Upper lobe of right lung (tissue), 1 donor: ENCODE measurements at regions of chr18 and their contacts with region 1.

Region 1: GRCh38 chr18:58781627-58782194 is 83.0 kb upstream of the ZNF532 start:
- DNase-seq: peak; percentile 72
- ATAC-seq: peak; percentile 92
- H3K4me3 ChIP-seq: no peak overlapping the region
- H3K27ac ChIP-seq: no peak overlapping the region
- H3K4me1 ChIP-seq: peaks cover 8% of the 10 kb centered on the region
- H3K27me3 ChIP-seq: no peaks in the 10 kb centered on the region
- CTCF ChIP-seq: peak; percentile 86

Region 2: DNA sequence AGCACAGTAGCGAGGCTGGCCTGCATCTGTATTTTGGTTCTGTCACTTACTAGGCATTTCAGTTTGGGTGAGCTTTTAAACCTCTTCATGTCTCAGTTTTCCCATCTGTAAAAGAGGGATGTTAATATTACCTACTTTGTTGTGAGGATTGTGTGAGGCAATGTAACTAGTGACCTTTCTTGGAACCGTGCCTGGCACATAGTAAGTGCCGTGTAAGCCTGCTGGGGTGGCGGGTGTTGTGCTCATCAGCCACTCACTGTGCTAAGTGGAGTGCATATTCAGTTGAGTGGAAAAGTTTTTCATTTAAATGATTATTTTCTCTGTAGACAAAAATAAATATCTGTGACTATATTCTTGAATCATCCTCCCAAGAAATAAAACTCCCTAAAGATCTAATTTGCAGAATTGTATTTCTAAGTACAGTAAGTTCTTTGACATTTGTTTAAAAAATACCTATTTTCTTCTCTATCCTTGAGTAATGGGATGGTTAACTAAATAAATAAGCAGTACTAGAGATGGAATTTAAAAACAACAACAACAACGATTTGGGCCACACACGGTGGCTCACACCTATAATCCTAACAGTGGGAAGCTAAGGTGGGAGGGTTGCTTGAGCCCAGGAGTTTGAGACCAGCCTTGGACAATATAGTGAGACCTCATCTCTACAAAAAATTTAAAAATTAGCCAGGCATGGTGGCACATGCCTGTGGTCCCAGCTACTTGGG is 53.8 kb before region 1 on chr18:
- intact Hi-C with region 1: no loop called
- DNase-seq: no peak
- ATAC-seq: no peak
- H3K4me3 ChIP-seq: no peak overlapping the region
- H3K27ac ChIP-seq: no peak overlapping the region
- H3K4me1 ChIP-seq: peaks cover 4% of the 10 kb centered on the region
- H3K27me3 ChIP-seq: no peaks in the 10 kb centered on the region
- CTCF ChIP-seq: no peak

Region 3: DNA sequence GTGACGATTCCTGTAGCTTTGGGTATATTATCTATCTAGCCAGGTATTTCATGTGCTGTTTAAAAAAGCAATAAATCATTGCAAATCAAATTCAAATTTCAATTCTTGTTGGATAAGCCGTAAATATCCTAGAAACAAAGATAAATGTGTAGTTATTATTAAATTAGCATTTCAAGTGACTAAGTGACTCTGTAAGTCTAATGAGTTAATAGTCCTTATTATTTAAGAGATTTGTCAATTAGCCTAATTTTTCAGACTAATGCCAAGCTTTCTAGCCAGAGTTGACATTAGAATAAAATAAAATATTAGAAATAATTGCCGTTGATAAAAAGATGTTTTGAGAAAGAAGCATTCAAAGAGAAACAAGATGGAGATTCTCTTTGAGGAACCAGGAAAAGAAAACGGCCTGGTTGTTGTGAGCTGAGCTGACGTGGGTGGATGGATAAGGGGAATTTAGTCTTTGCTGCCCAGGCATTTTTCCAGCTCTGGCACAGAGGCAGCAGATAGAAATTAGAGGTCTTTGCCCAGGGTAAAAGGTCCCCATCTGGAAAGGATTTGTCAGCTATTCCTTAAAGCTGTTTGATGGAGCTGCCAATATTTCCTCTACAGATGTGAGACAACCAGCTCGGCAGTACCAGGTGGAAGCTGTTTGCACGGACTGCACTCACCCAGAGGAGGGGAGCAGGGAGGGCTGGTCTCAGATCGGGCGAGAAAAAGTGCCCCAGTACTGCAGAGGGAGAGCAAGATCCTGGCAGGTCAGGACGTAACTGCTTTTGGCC is 240.6 kb after region 1 on chr18:
- intact Hi-C with region 1: no loop called
- DNase-seq: no peak
- ATAC-seq: peak; percentile 68
- H3K4me3 ChIP-seq: no peak overlapping the region
- H3K27ac ChIP-seq: peak overlapping the region; percentile 27
- H3K4me1 ChIP-seq: no peaks in the 10 kb centered on the region
- H3K27me3 ChIP-seq: no peaks in the 10 kb centered on the region
- CTCF ChIP-seq: no peak

Region 4: DNA sequence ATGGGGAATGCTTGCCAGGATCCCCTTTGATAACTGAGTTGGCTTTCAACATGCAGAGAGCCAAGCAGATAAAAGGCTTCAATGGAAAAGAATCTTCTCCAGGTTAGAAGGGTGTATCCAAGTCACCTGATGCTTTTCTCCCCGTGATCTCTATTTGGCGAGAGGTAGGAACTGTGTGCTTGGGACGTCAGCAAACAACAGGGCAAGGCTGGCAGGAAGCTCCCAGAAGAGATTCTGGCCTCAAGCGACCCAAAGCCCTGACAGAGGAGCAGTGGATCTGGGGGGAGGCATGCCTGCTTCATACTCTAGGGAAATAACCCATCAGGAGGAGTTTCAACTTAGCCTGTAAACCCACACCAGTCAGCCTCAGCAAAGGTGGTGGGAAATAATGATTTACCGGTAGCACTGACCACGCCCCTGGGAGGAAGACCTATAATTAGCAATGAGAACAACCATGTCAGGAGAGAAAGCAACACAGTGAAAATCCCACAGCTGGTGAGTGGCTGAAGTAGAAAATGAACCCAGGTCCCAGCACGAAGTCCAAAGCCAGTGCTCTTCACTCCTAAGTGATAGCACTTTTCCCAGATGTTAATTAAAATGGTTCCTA is 281.7 kb after region 1 on chr18:
- intact Hi-C with region 1: loop called (anchors 5 kb)
- DNase-seq: no peak
- ATAC-seq: no peak
- H3K4me3 ChIP-seq: no peak overlapping the region
- H3K27ac ChIP-seq: peak overlapping the region; percentile 0
- H3K4me1 ChIP-seq: no peaks in the 10 kb centered on the region
- H3K27me3 ChIP-seq: no peaks in the 10 kb centered on the region
- CTCF ChIP-seq: no peak